ENCODE measurements at regions of chr1 and their contacts with region 1.

Region 1: GRCh38 chr1:206489980-206490770 is 17.2 kb upstream of the RASSF5 start:
- DNase-seq: peak in 1 of 2 donors; percentile 90
- H3K4me3 ChIP-seq: no peak overlapping the region
- H3K27ac ChIP-seq: no peak overlapping the region
- H3K4me1 ChIP-seq: peaks cover 0 to 7% of the 10 kb centered on the region in 2 donors
- H3K27me3 ChIP-seq: no peaks in the 10 kb centered on the region
- CTCF ChIP-seq: peak; percentile 93 to 98 (median 98)

Region 2: GRCh38 chr1:205977402-205978014 is 512.7 kb before region 1 on chr1:
- intact Hi-C with region 1: no loop called
- DNase-seq: peak in 1 of 2 donors; percentile 75
- H3K4me3 ChIP-seq: no peak overlapping the region
- H3K27ac ChIP-seq: no peak overlapping the region
- H3K4me1 ChIP-seq: peaks cover 0 to 7% of the 10 kb centered on the region in 2 donors
- H3K27me3 ChIP-seq: no peaks in the 10 kb centered on the region
- CTCF ChIP-seq: peak; percentile 90 to 97 (median 93)

Region 3: GRCh38 chr1:206445116-206445515 is 45.1 kb before region 1 on chr1:
- intact Hi-C with region 1: no loop called
- DNase-seq: peak in 1 of 2 donors; percentile 83
- H3K4me3 ChIP-seq: no peak overlapping the region
- H3K27ac ChIP-seq: peak overlapping the region; percentile 60 to 61
- H3K4me1 ChIP-seq: peaks cover 3 to 9% of the 10 kb centered on the region in 2 donors
- H3K27me3 ChIP-seq: no peaks in the 10 kb centered on the region
- CTCF ChIP-seq: no peak

Region 4: GRCh38 chr1:206544562-206545257 is 54.5 kb after region 1 on chr1:
- intact Hi-C with region 1: loop called (anchors 1 kb)
- DNase-seq: peak in 1 of 2 donors; percentile 83
- H3K4me3 ChIP-seq: no peak overlapping the region
- H3K27ac ChIP-seq: no peak overlapping the region
- H3K4me1 ChIP-seq: peaks cover 0 to 17% of the 10 kb centered on the region in 2 donors
- H3K27me3 ChIP-seq: no peaks in the 10 kb centered on the region
- CTCF ChIP-seq: peak; percentile 63 to 91 (median 83)

Measured in ascending aorta (tissue), 2 donors.